Ascending aorta (tissue), 2 donors: ENCODE measurements at regions of chr3 and their contacts with region 1.

Region 1: GRCh38 chr3:156554842-156555687 is at the start of gene SSR3:
- DNase-seq: peak; percentile 98 to 100
- H3K4me3 ChIP-seq: peak within 1 kb of the TSS; percentile 84 to 95
- H3K27ac ChIP-seq: peak within 1 kb of the TSS; percentile 71 to 83
- H3K4me1 ChIP-seq: peaks cover 0 to 11% of the 10 kb centered on the region in 2 donors
- H3K27me3 ChIP-seq: no peaks in the 10 kb centered on the region
- CTCF ChIP-seq: peak in 1 of 3 experiments; percentile 54
- total RNA-seq, gene SSR3: 155 TPM

Region 2: GRCh38 chr3:156535162-156535627 is 19.9 kb before region 1 on chr3:
- intact Hi-C with region 1: loop called (anchors 1 kb)
- DNase-seq: peak; percentile 48 to 90
- H3K4me3 ChIP-seq: no peak overlapping the region
- H3K27ac ChIP-seq: peak overlapping the region; percentile 62 to 78
- H3K4me1 ChIP-seq: peaks cover 0 to 5% of the 10 kb centered on the region in 2 donors
- H3K27me3 ChIP-seq: no peaks in the 10 kb centered on the region
- CTCF ChIP-seq: peak; percentile 26 to 41 (median 37)

Region 3: DNA sequence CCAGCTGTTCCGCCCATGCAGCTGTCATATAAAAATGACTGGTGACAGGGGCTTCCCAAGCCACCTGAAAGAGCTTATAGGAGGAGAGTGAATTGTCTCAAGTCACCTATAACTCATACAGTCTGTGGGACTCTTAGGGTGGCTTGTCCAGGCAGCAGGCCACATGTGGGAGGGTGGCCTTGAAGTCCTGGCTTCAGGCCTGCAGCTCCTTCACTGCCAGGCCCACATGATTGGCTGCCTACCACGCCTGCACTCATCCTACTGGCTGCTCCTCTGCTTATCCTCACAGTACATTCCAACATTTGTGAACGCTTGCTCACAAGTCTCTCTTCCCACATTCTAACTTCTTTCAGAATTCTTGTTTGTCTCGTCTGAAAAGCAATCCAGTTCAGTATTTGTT is 78.3 kb after region 1 on chr3:
- intact Hi-C with region 1: no loop called
- DNase-seq: peak in 1 of 2 donors; percentile 77
- H3K4me3 ChIP-seq: no peak overlapping the region
- H3K27ac ChIP-seq: peak overlapping the region; percentile 32 to 51
- H3K4me1 ChIP-seq: peaks cover 0 to 3% of the 10 kb centered on the region in 2 donors
- H3K27me3 ChIP-seq: no peaks in the 10 kb centered on the region
- CTCF ChIP-seq: no peak

Region 4: DNA sequence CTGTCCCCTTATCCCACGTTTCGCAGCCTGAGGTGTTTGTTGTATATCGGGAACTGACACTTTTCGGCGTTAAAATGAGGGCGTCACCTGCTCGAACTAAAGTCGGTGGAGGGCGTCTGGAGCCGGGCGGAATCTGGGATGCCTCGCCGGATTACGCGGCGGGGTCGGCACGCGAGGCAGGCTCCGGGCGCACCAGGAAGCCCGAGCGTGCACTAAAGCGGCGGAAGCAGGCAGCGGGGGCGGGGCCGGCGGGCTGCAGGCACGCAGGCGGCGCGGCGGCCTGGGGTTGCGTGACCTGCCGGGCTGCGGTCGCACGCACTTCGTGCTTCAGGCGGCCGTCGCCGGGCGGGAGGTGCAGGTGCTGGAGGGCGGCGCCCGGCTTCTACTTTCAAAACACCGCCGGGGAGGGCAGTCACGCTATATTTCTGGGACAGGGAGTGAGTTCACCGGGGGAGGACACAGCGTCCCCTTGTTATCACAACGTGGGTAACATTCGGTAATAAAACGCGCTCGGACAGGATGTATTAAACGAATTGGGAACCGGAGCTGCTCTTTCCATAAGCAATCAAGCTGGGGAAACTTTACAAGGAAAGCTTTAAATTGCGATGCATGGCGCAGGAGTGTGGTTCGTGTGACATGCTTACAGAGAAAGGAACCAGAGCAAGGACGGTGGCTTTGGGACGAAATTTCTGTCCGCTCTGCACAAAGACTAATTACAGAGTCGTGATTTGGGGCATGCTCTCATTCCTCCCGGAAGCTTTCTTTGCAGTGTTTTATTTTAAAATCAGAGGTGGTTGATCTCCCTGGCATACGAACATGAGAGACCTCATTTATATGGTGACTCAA is 262.0 kb after region 1 on chr3:
- intact Hi-C with region 1: loop called (anchors 5 kb)
- DNase-seq: peak; percentile 20 to 90
- H3K4me3 ChIP-seq: peak overlapping the region; percentile 66 to 67
- H3K27ac ChIP-seq: peak overlapping the region; percentile 58 to 74
- H3K4me1 ChIP-seq: no peaks in the 10 kb centered on the region
- H3K27me3 ChIP-seq: no peaks in the 10 kb centered on the region
- CTCF ChIP-seq: peak in 1 of 3 experiments; percentile 16

Region 5: DNA sequence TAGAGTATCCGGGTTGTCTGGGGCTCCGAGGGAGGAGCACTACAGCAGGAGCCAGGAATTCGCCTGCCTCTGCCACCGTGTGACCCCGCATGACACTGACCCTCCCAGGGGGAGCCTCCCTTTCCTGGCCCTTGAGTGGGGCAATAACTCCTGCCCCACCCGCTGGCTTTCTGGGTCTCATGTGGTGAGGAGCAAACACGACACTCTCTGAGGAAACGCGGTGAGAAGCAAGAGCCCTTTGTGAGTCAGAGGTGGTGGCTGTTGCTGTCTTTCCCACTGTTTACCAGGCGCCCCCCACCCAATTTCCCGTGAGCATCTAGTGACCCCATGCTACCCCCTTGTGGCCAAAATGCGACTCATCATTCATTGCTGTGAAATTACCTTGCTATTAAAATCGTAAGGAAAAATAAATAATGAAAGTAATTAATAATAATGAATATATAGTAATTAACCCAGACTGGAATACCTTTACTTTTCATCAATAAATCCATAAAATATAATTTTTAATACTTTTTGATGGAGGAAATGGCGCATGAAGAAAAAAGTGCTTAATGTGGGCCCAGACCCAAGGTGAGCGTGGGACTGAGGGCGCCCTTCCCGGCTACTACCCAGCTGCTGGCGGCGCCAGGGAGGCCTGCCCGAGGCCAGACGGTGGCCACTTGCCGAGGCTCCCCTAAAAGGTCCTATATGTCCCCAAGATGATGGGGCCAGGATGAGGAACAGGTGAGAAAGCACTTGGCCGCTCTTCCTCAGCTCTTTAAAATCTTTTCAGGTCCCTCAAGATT is 575.6 kb after region 1 on chr3:
- intact Hi-C with region 1: loop called (anchors 5 kb)
- DNase-seq: peak in 1 of 2 donors; percentile 76
- H3K4me3 ChIP-seq: no peak overlapping the region
- H3K27ac ChIP-seq: peak overlapping the region in 1 of 2 donors; percentile 60
- H3K4me1 ChIP-seq: peaks cover 5 to 26% of the 10 kb centered on the region in 2 donors
- H3K27me3 ChIP-seq: no peaks in the 10 kb centered on the region
- CTCF ChIP-seq: peak; percentile 14 to 58 (median 23)